Tibial artery (tissue), 4 donors: ENCODE measurements at regions of chr6 and their contacts with region 1.

Region 1: DNA sequence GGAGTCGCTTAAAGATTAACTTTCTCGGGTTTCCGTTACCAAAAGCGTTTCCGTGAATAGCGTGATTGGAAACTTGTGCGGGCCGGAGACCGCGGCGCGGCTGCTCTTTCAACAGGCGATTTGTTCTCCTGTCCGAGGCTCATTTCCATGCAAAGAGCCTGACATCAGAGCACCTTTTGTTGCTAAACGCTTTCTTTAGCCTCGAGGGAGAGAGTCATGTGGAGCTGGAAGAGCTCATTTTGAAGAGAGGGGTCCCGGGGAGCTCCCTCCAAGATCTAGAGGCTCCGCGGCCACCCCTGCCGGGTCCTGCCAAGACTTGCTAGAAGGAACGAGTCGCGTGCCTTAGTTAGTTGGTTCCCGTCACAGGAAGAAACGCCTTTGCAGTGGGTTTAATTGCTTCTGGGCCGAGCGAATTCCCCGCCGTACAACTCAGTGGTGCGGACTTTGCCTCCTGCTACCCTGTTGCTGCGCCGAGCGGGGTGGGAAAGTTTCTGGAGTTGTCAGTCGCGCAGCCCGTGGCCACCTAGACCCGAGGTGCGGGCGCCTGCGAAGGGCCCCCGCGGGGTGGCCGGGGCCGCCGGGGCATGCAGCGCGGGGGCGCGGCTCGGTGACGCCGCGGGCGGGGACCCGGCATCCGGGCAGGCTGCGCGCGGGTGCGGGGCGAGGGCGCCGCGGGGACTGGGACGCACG is at the start of gene SASH1:
- DNase-seq: peak; percentile 70 to 87
- H3K4me3 ChIP-seq: peak within 1 kb of the TSS; percentile 84 to 90
- H3K27ac ChIP-seq: peak within 1 kb of the TSS; percentile 89 to 91
- H3K4me1 ChIP-seq: peaks cover 0 to 50% (median 26%) of the 10 kb centered on the region in 4 donors
- H3K27me3 ChIP-seq: no peaks in the 10 kb centered on the region
- CTCF ChIP-seq: no peak

Region 2: GRCh38 chr6:148240461-148240840 is 102.1 kb before region 1 on chr6:
- intact Hi-C with region 1: no loop called
- DNase-seq: no peak
- H3K4me3 ChIP-seq: no peak overlapping the region
- H3K27ac ChIP-seq: peak overlapping the region; percentile 51 to 79
- H3K4me1 ChIP-seq: peaks cover 0 to 69% (median 46%) of the 10 kb centered on the region in 4 donors
- H3K27me3 ChIP-seq: no peaks in the 10 kb centered on the region
- CTCF ChIP-seq: no peak

Region 3: DNA sequence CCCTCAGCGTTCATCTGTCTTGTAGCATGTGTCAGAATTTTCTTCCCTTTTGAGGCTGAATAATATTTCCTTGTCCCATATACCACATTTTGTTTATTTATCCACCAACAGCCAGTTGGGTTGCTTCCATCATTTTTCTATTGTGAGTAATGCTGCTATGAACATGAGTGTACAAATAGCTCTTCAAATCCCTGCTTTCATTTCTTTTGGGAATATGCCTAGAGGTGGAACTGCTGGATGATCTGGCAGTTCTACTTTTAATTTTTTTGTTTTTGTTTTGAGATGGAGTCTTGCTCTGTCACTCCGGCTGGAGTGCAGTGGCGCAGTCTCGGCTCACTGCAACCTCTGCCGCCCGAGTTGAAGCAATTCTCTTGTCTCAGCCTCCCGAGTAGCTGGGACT is 64.9 kb after region 1 on chr6:
- intact Hi-C with region 1: loop called (anchors 10 kb)
- DNase-seq: peak; percentile 35 to 71
- H3K4me3 ChIP-seq: no peak overlapping the region
- H3K27ac ChIP-seq: peak overlapping the region; percentile 61 to 75
- H3K4me1 ChIP-seq: peaks cover 0 to 33% (median 22%) of the 10 kb centered on the region in 4 donors
- H3K27me3 ChIP-seq: no peaks in the 10 kb centered on the region
- CTCF ChIP-seq: no peak